ENCODE measurements at regions of chr1 and their contacts with region 1.

Region 1: GRCh38 chr1:9960706-9961562 is 17.7 kb downstream of the NMNAT1 start:
- DNase-seq: no peak
- ATAC-seq: no peak
- H3K4me3 ChIP-seq: no peak overlapping the region
- H3K27ac ChIP-seq: no peak overlapping the region
- H3K4me1 ChIP-seq: peaks cover 0 to 8% (median 0%) of the 10 kb centered on the region in 12 donors
- H3K27me3 ChIP-seq: no peaks in the 10 kb centered on the region
- CTCF ChIP-seq: no peak
- POLR2A ChIP-seq: no peak

Region 2: GRCh38 chr1:10007169-10007568 is 46.2 kb after region 1 on chr1:
- intact Hi-C with region 1: loop called in 3 of 10 experiments (anchors 10 kb)
- DNase-seq: peak in 2 of 5 donors; percentile 24 to 25
- ATAC-seq: no peak
- H3K4me3 ChIP-seq: no peak overlapping the region
- H3K27ac ChIP-seq: peak overlapping the region in 2 of 12 donors; percentile 10 to 27
- H3K4me1 ChIP-seq: peaks cover 0 to 10% (median 2%) of the 10 kb centered on the region in 12 donors
- H3K27me3 ChIP-seq: no peaks in the 10 kb centered on the region
- CTCF ChIP-seq: no peak
- POLR2A ChIP-seq: no peak

Region 3: DNA sequence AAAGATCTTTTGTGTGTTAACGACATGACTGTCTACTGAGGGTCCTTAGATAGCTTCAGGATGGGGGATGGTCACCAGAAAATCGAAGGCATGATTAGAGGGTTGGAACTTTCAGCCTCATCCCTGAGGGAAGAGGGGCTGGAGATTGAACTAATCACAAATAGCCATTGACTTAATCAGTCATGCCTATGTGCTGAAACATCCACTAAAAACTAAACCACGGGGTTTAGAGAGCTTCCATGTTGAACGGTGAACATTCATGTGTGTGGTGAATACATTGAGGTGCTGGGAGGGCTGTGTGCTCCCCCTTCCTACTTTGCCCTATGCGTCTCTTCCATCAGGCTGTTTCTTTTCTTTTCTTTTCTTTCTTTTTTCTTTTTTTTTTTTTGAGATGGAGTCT is 53.1 kb after region 1 on chr1:
- intact Hi-C with region 1: loop called in 3 of 10 experiments (anchors 10 kb)
- DNase-seq: no peak
- ATAC-seq: no peak
- H3K4me3 ChIP-seq: no peak overlapping the region
- H3K27ac ChIP-seq: no peak overlapping the region
- H3K4me1 ChIP-seq: peaks cover 0 to 9% (median 5%) of the 10 kb centered on the region in 12 donors
- H3K27me3 ChIP-seq: no peaks in the 10 kb centered on the region
- CTCF ChIP-seq: no peak
- POLR2A ChIP-seq: no peak

Region 4: GRCh38 chr1:10022656-10023055 is 61.7 kb after region 1 on chr1:
- intact Hi-C with region 1: loop called in 3 of 10 experiments (anchors 5 to 10 kb)
- DNase-seq: no peak
- ATAC-seq: no peak
- H3K4me3 ChIP-seq: no peak overlapping the region
- H3K27ac ChIP-seq: no peak overlapping the region
- H3K4me1 ChIP-seq: no peaks in the 10 kb centered on the region
- H3K27me3 ChIP-seq: no peaks in the 10 kb centered on the region
- CTCF ChIP-seq: no peak
- POLR2A ChIP-seq: no peak

Region 5: GRCh38 chr1:10338047-10338446 is 377.1 kb after region 1 on chr1:
- intact Hi-C with region 1: loop called in 1 of 10 experiments (anchors 10 kb)
- DNase-seq: peak in 4 of 5 donors; percentile 33 to 54 (median 43)
- ATAC-seq: peak; percentile 83 to 91 (median 86)
- H3K4me3 ChIP-seq: no peak overlapping the region
- H3K27ac ChIP-seq: peak overlapping the region in 2 of 12 donors; percentile 36 to 48
- H3K4me1 ChIP-seq: peaks cover 0 to 25% (median 12%) of the 10 kb centered on the region in 12 donors
- H3K27me3 ChIP-seq: no peaks in the 10 kb centered on the region
- CTCF ChIP-seq: peak; percentile 48 to 78 (median 72)
- POLR2A ChIP-seq: no peak